Gastrocnemius medialis (tissue), 4 donors: ENCODE measurements at regions of chr6 and their contacts with region 1.

Region 1: DNA sequence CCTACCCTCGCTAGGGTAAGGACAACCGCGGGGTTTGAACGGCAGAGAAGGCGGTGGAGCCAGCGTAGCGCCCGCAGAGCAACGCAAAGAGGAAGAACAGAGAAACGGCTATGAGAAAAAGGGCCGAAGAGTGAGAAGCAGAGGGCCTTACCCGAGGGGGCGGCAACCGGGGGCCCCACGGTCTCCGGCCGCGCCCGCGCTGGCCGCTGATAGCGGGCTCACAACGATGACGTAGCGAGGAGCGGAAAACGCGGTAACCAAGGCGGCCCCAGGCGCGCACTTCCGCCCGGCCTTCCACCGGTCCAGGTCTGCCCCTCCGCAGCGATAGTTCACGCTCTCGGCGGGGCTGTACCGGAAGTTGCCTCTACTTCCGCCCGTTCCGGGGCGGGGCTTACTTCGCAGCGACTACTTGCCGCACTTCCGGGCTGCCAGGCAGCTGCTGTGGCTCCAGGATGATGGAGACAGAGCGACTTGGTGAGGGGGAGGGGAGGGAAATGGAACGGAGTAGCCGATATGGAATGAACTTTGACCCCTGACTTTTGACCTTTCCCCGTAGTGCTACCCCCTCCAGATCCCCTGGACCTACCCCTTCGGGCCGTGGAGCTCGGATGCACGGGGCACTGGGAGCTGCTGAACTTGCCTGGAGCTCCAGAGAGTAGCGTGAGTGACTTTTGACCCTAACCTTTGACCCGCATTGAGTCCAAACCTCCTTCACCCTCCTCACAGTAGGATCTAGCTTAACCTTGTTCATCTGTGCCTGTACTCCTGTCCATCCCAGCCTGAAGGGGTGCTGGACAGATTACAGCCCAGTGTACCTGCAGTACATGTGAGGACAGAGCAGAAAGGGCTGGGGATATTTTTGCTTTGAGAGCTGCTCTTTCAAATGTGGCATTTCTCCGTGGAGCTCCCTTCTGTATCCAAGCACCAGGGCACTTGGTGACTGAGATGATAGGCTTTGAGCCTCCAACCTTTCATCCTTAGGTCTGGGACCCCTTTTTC is at the starts of genes NELFE and SKIC2:
- DNase-seq: peak; percentile 95 to 98
- ATAC-seq: peak; percentile 98 to 99
- H3K4me3 ChIP-seq: peak within 1 kb of the TSS; percentile 82 to 94 (median 88)
- H3K27ac ChIP-seq: peak within 1 kb of the TSS; percentile 82 to 89 (median 87)
- H3K4me1 ChIP-seq: peaks cover 17 to 20% of the 10 kb centered on the region in 2 donors
- H3K27me3 ChIP-seq: no peaks in the 10 kb centered on the region
- CTCF ChIP-seq: no peak
- POLR2A ChIP-seq: peak; percentile 72 to 76
- total RNA-seq, gene NELFE: 58.1 to 88.6 (median 78.7) TPM
- total RNA-seq, gene SKIC2: 21.2 to 51.9 (median 22.7) TPM

Region 2: DNA sequence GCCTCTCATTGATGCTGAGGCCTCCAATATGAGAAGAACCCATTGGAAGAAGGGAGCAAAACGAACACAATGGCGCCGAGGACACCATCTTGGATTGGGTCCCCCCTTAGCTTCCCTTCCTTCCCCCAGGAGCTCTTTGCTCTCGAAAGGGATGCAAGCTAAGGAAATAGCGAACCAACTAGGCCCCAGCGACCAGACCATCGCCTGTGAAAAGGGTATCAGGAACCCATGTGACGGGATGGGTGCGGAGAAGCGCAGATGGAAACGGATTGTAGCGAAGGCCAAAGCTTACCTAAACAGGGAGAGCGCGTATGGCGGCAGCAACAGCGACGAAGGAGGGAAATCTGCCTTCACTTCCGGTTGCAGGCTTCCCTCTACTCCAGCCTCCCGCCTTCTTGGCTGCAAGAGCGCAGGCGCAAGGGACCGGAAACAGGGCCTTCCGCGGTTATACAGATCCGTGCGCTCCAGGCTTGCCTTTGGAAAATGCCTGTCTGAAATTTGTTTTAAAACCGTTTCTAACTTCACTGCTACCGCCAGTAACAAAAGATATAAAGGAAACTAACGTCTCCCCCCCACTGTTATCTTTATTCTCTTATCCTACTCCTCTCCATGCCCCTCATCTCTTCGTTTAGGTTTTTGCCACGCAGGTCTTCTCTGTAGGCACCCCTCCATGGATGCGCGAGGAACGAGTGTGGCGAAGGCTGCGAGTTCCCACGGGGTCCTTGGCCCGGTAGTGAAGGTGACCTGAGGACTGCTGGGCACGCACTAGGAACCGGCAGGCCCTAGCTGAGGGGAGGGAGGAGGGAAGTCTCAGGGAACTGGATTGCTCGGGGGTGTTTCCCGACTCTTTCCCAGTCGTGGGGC is 417.1 kb before region 1 on chr6 and contains the start of gene DDX39B:
- in situ Hi-C with region 1: loop called in 1 of 4 experiments (anchors 10 kb)
- intact Hi-C with region 1: loop called (anchors 5 kb)
- DNase-seq: peak; percentile 96 to 97
- ATAC-seq: peak; percentile 94 to 95
- H3K4me3 ChIP-seq: peak within 1 kb of the TSS; percentile 81 to 91 (median 85)
- H3K27ac ChIP-seq: peak within 1 kb of the TSS; percentile 96 to 98 (median 96)
- H3K4me1 ChIP-seq: peaks cover 31 to 38% of the 10 kb centered on the region in 2 donors
- H3K27me3 ChIP-seq: no peaks in the 10 kb centered on the region
- CTCF ChIP-seq: no peak
- POLR2A ChIP-seq: peak; percentile 72 to 77
- total RNA-seq, gene DDX39B: 107 to 198 (median 144) TPM

Region 3: DNA sequence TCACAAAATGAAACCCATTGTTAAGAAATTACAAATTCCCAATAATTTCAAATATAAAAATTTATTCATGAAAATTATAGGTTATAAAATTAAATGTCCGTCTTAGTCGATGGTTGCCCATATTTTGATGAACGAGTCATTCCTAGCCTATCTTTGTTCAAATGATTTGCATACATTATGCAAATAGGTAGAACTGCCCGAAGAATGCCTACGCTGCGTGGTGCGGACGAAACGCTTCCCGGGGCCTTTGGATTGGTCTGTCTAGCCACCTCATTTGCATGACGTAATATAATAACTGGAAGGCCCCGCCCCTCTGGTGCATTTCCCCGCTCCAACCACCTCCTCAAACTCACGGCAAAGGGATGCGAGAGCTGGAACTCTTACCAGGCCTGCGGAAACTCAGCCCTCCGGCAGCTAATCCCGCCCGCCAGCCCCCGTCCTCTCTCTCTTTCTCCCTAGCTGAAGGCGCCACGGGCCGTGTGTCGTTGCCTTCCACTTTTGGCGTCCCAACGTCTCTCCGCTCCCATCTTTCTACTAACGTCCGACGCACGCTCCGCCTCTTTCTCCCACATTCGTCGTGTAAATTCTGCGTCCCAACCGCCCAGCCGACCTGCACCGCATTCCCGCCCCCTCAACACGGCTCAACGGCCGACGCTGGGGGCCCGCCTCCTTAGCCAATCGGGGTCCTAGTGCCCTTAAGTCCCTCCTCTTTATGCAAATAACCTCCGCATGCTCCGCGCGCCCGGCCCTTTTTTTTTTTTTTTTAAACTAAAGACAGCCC is 339.0 kb before region 1 on chr6:
- in situ Hi-C with region 1: no loop called
- intact Hi-C with region 1: loop called (anchors 1 kb)
- DNase-seq: peak; percentile 97 to 99
- ATAC-seq: peak; percentile 86 to 87
- H3K4me3 ChIP-seq: peak overlapping the region; percentile 62 to 95 (median 82)
- H3K27ac ChIP-seq: peak overlapping the region; percentile 91 to 97 (median 96)
- H3K4me1 ChIP-seq: peaks cover 19 to 21% of the 10 kb centered on the region in 2 donors
- H3K27me3 ChIP-seq: no peaks in the 10 kb centered on the region
- CTCF ChIP-seq: no peak
- POLR2A ChIP-seq: peak; percentile 69 to 90

Region 4: DNA sequence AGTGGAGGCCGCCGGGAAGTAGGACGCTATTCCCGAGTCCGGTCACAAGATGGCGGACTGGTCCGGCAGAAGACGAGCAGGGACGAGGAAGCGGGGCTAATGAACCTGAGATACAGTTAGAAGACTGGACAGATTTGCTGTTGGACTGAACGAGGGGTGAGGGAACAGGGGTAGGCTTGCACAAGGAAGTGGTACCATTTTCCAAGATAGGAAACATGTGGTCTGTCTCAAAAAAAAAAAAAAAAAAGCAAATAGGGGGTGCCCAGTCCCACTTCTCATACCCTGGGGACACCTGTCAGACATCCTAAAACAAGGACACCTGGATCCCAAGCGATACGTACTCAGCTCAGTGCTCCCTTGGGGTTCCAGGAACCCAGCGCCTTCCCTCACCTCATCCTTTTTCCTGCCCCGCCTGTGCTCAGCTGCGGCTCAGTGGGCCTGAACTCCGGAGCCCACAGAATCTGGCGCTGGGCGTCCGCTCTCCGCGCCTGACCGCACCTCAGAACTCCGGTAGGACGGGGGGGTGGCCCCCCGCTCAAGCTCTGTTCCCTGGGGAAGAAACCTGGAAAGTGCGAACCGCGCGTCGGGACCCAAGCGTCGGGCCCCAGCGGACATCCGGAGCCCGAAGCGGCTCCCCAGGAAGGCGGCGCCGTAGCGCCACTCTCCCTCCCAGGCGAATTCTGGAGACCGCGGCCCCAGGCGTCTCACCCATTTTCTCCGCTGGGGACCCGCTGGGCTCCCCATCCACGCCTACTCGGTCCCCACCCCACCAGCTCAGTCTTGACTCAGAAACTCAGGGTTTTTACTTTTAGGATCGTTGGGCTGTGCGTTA is 278.0 kb before region 1 on chr6 and contains the start of gene LY6G5C:
- in situ Hi-C with region 1: loop called in 1 of 4 experiments (anchors 25 kb)
- intact Hi-C with region 1: loop called (anchors 2 kb)
- DNase-seq: peak; percentile 77 to 82
- ATAC-seq: peak; percentile 97
- H3K4me3 ChIP-seq: peak within 1 kb of the TSS; percentile 43 to 85 (median 66)
- H3K27ac ChIP-seq: peak within 1 kb of the TSS; percentile 22 to 74 (median 56)
- H3K4me1 ChIP-seq: peaks cover 13% of the 10 kb centered on the region in 2 donors
- H3K27me3 ChIP-seq: no peaks in the 10 kb centered on the region
- CTCF ChIP-seq: peak; percentile 60 to 80 (median 76)
- POLR2A ChIP-seq: no peak
- total RNA-seq, gene LY6G5C: 1.3 to 3.2 TPM in 2 of 4 donors, not detected in the others

Region 5: DNA sequence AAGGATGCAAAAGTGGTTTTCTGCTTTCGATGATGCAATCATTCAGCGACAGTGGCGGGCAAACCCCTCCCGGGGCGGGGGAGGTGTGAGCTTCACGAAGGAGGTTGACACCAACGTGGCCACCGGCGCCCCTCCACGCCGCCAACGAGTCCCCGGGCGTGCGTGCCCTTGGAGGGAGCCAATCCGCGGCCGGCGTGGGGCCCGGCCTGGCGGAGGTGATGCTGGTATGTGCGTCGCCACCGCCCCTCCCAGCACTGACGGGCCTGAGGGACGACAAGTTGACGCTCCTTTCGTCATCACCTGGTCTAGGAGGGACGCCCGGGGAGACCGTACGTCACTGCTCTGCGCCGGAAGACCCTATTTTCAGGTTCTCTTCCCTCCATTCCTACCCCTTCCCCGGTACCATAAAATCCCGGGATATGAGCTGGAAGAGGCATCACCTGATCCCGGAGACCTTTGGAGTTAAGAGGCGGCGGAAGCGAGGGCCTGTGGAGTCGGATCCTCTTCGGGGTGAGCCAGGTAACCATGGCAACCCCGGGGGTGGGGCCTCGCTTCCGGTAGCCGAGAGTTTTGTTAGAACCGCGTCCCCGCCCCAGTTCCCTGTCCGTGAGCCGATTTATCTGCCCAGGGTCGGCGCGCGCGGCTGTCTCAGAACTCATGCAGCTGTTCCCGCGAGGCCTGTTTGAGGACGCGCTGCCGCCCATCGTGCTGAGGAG is 13.1 kb after region 1 on chr6 and contains the start of gene DXO:
- in situ Hi-C with region 1: no loop called
- intact Hi-C with region 1: loop called (anchors 1 kb)
- DNase-seq: peak; percentile 94 to 95
- ATAC-seq: peak; percentile 97 to 98
- H3K4me3 ChIP-seq: peak within 1 kb of the TSS; percentile 74 to 91 (median 85)
- H3K27ac ChIP-seq: peak within 1 kb of the TSS; percentile 90 to 97 (median 92)
- H3K4me1 ChIP-seq: peaks cover 23 to 29% of the 10 kb centered on the region in 2 donors
- H3K27me3 ChIP-seq: no peaks in the 10 kb centered on the region
- CTCF ChIP-seq: no peak
- POLR2A ChIP-seq: peak; percentile 67 to 74
- total RNA-seq, gene DXO: 5.8 to 11.5 (median 8.5) TPM

Region 6: GRCh38 chr6:32127717-32128592 is 168.9 kb after region 1 on chr6 and contains the start of gene ATF6B:
- in situ Hi-C with region 1: loop called in 1 of 4 experiments (anchors 25 kb)
- intact Hi-C with region 1: no loop called
- DNase-seq: peak; percentile 100
- ATAC-seq: peak; percentile 95 to 96
- H3K4me3 ChIP-seq: peak within 1 kb of the TSS; percentile 91 to 99 (median 96)
- H3K27ac ChIP-seq: peak within 1 kb of the TSS; percentile 89 to 93 (median 92)
- H3K4me1 ChIP-seq: peaks cover 24 to 26% of the 10 kb centered on the region in 2 donors
- H3K27me3 ChIP-seq: no peaks in the 10 kb centered on the region
- CTCF ChIP-seq: no peak
- POLR2A ChIP-seq: peak; percentile 57 to 67
- total RNA-seq, gene ATF6B: 6.8 to 18.4 (median 9.5) TPM

Region 7: GRCh38 chr6:32271429-32271828 is 312.4 kb after region 1 on chr6:
- in situ Hi-C with region 1: no loop called
- intact Hi-C with region 1: no loop called
- DNase-seq: no peak
- ATAC-seq: no peak
- H3K4me3 ChIP-seq: no peak overlapping the region
- H3K27ac ChIP-seq: no peak overlapping the region
- H3K4me1 ChIP-seq: no peaks in the 10 kb centered on the region
- H3K27me3 ChIP-seq: no peaks in the 10 kb centered on the region
- CTCF ChIP-seq: no peak
- POLR2A ChIP-seq: no peak

Region 8: DNA sequence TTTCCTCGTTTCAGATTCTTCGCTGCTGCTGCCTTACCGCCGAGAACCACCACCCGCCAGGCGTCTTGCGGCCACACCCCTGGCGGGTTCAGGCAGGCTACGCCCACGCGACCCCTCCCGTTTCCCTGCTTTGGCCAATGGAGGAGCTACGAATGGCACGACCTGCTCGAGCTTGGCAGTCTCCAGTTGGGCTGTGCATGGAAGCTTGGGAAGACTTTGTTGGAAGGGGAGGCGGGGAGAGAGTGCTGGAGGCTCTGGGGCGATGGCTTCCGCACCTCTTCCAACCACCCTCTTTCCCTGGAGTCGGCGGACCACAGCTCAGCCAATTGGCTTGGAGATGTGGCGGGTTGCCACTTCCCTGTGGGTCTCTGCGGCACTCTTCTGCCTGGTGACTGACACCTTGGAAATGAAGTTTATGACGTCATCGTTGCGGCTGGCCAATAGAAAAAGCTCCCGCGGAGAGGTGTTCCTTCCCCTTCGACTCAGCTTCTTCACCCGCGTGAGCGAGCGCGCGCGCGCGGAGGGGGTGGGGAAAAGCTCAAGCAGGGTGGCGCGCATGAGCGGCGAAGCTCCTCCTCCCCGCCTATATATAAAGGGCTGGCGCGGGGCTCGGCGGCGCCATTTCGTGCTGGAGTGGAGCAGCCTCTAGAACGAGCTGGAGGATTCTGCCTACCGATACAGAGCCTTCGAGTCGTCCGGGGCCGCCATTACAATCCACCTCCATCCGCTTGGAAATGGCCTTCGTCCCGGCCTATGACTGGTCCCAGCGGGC is 1012.7 kb after region 1 on chr6:
- in situ Hi-C with region 1: loop called in 1 of 4 experiments (anchors 25 kb)
- intact Hi-C with region 1: no loop called
- DNase-seq: peak; percentile 100
- ATAC-seq: peak; percentile 59 to 67
- H3K4me3 ChIP-seq: peak overlapping the region; percentile 95 to 97 (median 96)
- H3K27ac ChIP-seq: peak overlapping the region; percentile 97 to 100 (median 100)
- H3K4me1 ChIP-seq: peaks cover 34% of the 10 kb centered on the region in 2 donors
- H3K27me3 ChIP-seq: no peaks in the 10 kb centered on the region
- CTCF ChIP-seq: peak in 1 of 5 experiments; percentile 17
- POLR2A ChIP-seq: peak; percentile 99